Activated B cell treated with CpG ODN at 0.5 μM for 24 hours (primary cell): ENCODE measurements at regions of chr15 and their contacts with region 1.

Region 1: DNA sequence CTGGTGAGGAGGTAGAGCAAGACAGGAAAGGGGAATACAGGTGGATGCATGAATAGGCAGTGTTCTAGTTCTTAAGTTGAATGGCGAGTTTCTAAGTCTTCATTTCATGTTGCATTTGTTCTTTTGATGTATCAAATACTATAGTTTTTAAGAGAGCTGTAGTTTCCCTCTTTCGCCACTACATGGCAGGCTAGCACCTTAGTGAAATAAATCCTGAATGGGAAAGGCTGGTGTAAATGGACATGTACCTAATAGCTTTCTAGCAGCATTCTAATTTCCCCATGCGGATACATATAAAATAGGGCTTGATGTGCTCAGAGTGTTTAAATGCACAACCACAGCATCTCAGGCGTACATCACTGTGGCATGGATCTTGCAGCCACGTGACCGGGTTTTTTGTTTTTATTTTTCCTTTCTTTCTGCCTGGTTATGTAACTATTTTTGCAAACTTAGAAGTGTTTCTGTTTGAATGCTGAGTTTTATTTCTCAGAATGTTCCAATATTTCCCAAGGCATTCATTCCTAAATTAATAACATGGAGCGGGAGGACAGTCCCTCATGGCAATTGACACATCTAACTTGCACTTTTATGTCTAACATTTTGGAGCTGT is 23.5 kb upstream of the CLN6 start:
- DNase-seq: no peak
- ATAC-seq: peak; percentile 37
- H3K4me3 Mint-ChIP-seq: no peak overlapping the region
- H3K27ac Mint-ChIP-seq: no peak overlapping the region
- H3K4me1 Mint-ChIP-seq: peaks cover 4% of the 10 kb centered on the region
- H3K27me3 Mint-ChIP-seq: peaks cover 17% of the 10 kb centered on the region
- CTCF ChIP-seq: peak; percentile 34

Region 2: DNA sequence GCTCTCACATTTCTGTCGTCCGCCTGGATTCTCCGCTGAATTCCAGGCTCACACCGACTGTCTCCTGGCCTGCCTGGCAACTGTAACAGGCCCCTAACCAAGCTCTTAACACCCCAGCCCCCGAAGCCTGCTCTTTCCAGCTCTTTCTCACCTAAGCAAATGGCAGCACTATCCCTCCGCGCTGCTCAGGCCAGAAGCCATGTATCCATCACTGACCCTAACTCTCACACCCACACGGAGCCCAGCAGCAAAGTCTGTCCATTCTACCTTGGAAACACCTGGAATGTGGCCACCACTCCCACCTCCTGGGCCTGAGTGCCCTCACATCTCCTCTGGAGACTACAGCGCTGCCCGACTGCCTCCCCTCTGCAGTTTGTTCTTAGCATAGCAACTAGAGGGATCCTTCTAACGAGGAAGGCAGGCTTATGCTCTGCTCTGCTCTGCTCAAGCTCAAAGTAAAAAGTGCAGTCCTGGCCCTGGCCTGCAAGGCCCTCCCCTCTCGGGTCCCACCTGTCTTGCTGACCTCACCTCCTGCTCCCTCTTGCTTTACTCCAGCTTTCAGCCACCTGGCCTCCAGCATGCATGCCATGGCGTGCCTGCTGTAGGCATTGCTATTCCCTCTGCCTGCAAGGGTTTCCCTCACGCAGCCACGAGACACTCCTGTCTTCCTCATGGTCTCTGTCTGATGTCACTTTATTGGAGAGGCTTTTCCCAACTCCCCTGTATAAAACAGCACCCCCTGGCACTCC is 51.7 kb after region 1 on chr15:
- CTCF ChIA-PET with region 1: interaction called, 33 read pairs
- POLR2A ChIA-PET with region 1: interaction called, 10 read pairs
- intact Hi-C with region 1: loop called (anchors 1 kb)
- DNase-seq: no peak
- ATAC-seq: no peak
- H3K4me3 Mint-ChIP-seq: no peak overlapping the region
- H3K27ac Mint-ChIP-seq: no peak overlapping the region
- H3K4me1 Mint-ChIP-seq: peaks cover 8% of the 10 kb centered on the region
- H3K27me3 Mint-ChIP-seq: peaks cover 3% of the 10 kb centered on the region
- CTCF ChIP-seq: no peak

Region 3: DNA sequence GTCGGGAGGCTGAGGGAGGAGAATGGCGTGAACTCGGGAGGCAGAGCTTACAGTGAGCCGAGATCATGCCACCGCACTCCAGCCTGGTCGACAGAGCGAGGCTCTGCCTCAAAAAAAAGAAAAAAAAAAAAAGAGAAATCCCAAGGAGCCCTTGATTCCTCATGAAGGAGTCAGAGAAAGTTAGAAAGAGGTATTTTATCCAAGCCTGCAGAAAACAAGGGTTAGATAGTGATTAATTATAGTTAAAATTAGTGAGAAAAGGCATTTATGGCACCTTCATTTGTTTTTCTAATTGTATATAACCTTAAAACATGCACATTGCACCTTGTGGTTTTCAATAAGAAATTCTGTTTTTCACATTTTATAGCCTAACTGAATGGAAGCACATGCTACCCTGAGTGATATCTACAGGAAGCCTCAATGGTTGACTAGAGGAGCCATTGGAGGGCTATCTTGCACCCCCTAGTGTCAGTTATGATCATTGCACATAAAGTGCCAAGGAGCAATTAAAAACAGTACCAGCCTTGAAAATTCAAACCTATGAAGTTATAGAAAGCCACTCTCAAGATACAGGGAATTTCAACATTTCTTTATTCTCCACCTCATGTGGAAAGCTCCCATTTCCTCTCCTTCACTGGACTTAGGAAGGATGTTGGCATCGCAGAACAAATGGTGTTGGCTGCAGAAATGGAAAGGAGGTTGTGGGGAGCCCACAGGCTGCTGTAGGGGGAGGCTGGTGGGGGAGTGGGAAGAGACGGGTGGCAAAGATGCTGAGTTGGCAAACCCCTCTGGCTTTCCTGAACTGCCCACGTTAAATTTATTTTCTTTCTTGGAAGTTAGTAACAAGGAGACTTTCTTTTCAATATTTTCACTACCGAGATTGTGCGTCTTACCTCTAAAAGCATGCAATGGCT is 130.4 kb after region 1 on chr15:
- CTCF ChIA-PET with region 1: interaction called, 17 read pairs
- POLR2A ChIA-PET with region 1: no interaction called
- intact Hi-C with region 1: loop called (anchors 1 kb)
- DNase-seq: no peak
- ATAC-seq: peak; percentile 62
- H3K4me3 Mint-ChIP-seq: no peak overlapping the region
- H3K27ac Mint-ChIP-seq: no peak overlapping the region
- H3K4me1 Mint-ChIP-seq: peaks cover 8% of the 10 kb centered on the region
- H3K27me3 Mint-ChIP-seq: no peaks in the 10 kb centered on the region
- CTCF ChIP-seq: no peak

Region 4: GRCh38 chr15:68550481-68551295 is 297.7 kb after region 1 on chr15:
- CTCF ChIA-PET with region 1: interaction called, 6 read pairs
- POLR2A ChIA-PET with region 1: no interaction called
- intact Hi-C with region 1: loop called (anchors 5 kb)
- DNase-seq: peak; percentile 68
- ATAC-seq: peak; percentile 67
- H3K4me3 Mint-ChIP-seq: no peak overlapping the region
- H3K27ac Mint-ChIP-seq: no peak overlapping the region
- H3K4me1 Mint-ChIP-seq: no peaks in the 10 kb centered on the region
- H3K27me3 Mint-ChIP-seq: peaks cover 22% of the 10 kb centered on the region
- CTCF ChIP-seq: peak; percentile 65